ENCODE measurements at regions of chr1 and their contacts with region 1.

Region 1: DNA sequence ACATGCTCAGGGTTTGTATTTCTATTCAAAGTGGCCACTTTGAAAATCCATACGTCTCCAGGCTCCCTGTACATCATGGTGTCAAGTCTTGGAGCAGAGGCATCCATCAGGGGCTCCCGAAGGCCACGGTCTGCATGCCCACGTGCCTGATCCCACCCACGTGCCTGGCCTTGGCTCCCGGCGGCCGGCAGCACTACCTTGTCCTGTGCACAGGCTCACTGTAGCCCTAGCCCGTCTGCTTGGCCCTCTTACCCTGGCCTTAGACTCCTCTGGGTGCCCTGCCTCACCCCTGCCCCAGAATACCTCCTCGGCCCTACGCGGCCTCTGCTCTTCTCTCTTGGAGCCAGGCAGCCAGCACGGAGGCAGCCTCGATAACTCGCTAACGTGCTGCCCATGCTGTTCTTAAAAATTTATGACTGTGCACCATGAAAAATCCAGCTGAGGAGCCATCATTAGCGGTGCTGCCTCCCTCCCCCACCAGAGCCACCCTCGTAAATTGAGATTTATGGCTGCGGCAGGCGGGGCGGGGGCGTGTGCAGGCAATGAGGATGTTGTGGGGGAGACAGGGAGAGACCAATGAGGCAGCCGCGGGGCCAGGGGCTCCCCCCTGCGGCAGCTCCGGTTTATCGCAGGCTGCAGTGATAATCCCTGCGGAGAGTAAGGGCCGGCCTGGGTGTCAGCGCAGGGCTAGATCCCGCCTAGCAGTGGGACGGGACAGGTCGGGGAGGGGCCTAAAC is 24.6 kb downstream of the DMAP1 start:
- DNase-seq: peak; percentile 90
- H3K4me3 ChIP-seq: no peak overlapping the region
- H3K27ac ChIP-seq: peak overlapping the region; percentile 32
- H3K4me1 ChIP-seq: peaks cover 18% of the 10 kb centered on the region
- H3K27me3 ChIP-seq: no peaks in the 10 kb centered on the region
- CTCF ChIP-seq: peak; percentile 73

Region 2: GRCh38 chr1:44294588-44295007 is 56.7 kb after region 1 on chr1:
- intact Hi-C with region 1: loop called (anchors 5 kb)
- DNase-seq: peak; percentile 76
- H3K4me3 ChIP-seq: no peak overlapping the region
- H3K27ac ChIP-seq: no peak overlapping the region
- H3K4me1 ChIP-seq: peaks cover 14% of the 10 kb centered on the region
- H3K27me3 ChIP-seq: no peaks in the 10 kb centered on the region
- CTCF ChIP-seq: peak; percentile 56

Region 3: DNA sequence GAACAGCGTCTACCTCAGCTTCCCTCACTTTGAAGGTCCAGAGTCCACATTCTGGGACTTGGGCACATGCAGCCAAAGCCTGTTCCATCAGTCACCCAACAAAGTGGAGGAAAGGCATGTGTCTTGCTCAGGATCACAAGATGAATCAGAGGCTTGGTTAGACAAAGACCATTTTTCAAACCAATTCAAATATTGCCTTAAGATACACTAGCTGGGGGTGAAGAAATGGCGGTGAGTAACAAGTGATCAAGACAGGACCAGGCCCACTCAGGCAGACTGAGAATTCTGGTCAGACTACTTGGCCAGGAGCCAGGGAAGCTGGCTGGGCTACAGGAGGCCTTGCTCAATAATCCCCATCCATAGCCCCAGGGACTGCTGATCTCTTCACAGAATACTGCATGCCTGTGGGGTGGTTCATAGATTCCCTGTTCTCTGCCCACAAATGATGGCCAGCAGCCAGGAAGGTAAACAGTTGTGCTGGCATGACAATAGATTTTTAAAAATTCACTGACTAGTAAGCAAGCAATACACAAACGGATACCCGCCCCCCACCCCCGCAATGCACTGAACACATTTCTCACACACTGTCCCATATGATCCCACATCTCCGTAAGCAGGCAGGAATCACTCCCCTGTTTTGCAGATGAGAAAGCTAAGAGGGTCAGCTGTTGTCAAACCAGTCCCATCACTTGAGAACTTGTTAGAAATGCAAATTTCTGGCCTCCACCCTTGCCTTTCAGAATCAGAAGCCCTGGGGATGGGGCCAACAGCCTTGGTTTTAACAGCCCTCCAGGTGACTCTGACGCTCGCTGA is 90.0 kb after region 1 on chr1:
- intact Hi-C with region 1: no loop called
- DNase-seq: peak; percentile 58
- H3K4me3 ChIP-seq: no peak overlapping the region
- H3K27ac ChIP-seq: no peak overlapping the region
- H3K4me1 ChIP-seq: no peaks in the 10 kb centered on the region
- H3K27me3 ChIP-seq: no peaks in the 10 kb centered on the region
- CTCF ChIP-seq: no peak

Region 4: GRCh38 chr1:44354840-44355581 is 117.1 kb after region 1 on chr1 and contains the start of gene ERI3:
- intact Hi-C with region 1: no loop called
- DNase-seq: peak; percentile 97
- H3K4me3 ChIP-seq: peak within 1 kb of the TSS; percentile 99
- H3K27ac ChIP-seq: peak within 1 kb of the TSS; percentile 32
- H3K4me1 ChIP-seq: peaks cover 13% of the 10 kb centered on the region
- H3K27me3 ChIP-seq: no peaks in the 10 kb centered on the region
- CTCF ChIP-seq: no peak
- total RNA-seq, gene ERI3: 29.7 to 58.2 TPM